WTC11 (cell line): ENCODE measurements at regions of chr11 and their contacts with region 1.

Region 1: GRCh38 chr11:100827934-100828661 is 141.0 kb downstream of the ARHGAP42 start:
- DNase-seq: no peak
- ATAC-seq: peak; percentile 86
- H3K4me3 Mint-ChIP-seq: no peak overlapping the region
- H3K27ac Mint-ChIP-seq: peak overlapping the region; percentile 97
- H3K4me1 Mint-ChIP-seq: peaks cover 70% of the 10 kb centered on the region
- H3K27me3 Mint-ChIP-seq: no peaks in the 10 kb centered on the region
- CTCF ChIP-seq: no peak

Region 2: DNA sequence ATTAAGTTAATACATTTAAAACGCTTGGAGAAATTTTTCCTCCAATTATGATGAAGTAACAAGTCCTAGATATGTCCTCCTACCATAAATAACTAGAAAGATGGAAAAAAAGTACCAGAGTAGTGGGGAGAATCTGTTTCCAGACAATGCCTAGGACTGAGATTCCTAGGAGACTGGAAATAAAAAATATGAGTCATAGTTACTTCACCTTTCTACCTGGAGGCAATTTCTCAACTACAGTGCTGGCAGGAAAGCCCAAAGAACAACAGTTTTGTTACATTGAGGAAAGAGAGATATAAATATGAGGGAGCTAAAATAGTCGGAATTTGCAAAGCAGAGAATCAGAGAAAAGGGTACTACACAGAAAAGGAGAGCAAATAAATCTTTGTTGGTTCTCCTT is 343.1 kb before region 1 on chr11:
- CTCF ChIA-PET with region 1: no interaction called
- POLR2A ChIA-PET with region 1: no interaction called
- DNase-seq: no peak
- ATAC-seq: no peak
- H3K4me3 Mint-ChIP-seq: no peak overlapping the region
- H3K27ac Mint-ChIP-seq: no peak overlapping the region
- H3K4me1 Mint-ChIP-seq: peaks cover 12% of the 10 kb centered on the region
- H3K27me3 Mint-ChIP-seq: peaks cover 4% of the 10 kb centered on the region; the same call in 1 of the 2 replicates
- CTCF ChIP-seq: no peak

Region 3: DNA sequence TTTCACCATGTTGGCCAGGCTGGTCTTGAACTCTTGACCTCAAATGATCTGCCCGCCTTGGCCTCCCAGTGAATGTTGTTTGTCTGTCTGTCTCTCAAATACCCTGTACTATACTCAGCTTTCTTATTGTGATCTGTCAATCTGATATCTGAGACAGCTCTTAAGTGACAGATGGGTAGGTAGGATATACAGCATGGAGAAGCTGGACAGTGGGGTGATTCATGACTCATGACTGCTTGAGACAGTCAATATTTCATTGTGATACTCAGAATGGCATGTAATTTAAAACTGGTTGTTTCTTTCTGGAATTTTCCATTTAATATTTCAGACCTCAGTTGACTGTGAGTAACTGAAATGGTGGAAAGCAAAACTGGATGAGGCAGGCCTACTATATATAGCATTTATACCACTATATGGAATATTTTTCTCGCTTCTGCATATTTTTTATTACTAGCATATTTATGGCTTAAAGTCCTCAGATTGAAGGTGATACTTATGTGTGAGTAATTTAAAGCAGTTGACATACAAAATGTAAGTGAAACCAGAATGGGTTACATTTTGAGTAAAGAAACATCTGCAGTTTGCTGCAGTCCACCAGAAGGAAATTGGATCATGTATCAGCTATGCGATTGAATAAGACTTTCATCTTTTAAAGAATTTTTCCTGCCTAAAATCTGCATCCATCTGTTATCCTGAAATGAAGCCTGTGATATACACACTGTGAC is 118.7 kb before region 1 on chr11:
- CTCF ChIA-PET with region 1: no interaction called
- POLR2A ChIA-PET with region 1: interaction called, 12 read pairs
- DNase-seq: no peak
- ATAC-seq: no peak
- H3K4me3 Mint-ChIP-seq: no peak overlapping the region
- H3K27ac Mint-ChIP-seq: peak overlapping the region; percentile 19; the same call in 1 of the 2 replicates
- H3K4me1 Mint-ChIP-seq: peaks cover 29% of the 10 kb centered on the region
- H3K27me3 Mint-ChIP-seq: no peaks in the 10 kb centered on the region
- CTCF ChIP-seq: no peak